ENCODE measurements at regions of chr11 and their contacts with region 1.

Region 1: DNA sequence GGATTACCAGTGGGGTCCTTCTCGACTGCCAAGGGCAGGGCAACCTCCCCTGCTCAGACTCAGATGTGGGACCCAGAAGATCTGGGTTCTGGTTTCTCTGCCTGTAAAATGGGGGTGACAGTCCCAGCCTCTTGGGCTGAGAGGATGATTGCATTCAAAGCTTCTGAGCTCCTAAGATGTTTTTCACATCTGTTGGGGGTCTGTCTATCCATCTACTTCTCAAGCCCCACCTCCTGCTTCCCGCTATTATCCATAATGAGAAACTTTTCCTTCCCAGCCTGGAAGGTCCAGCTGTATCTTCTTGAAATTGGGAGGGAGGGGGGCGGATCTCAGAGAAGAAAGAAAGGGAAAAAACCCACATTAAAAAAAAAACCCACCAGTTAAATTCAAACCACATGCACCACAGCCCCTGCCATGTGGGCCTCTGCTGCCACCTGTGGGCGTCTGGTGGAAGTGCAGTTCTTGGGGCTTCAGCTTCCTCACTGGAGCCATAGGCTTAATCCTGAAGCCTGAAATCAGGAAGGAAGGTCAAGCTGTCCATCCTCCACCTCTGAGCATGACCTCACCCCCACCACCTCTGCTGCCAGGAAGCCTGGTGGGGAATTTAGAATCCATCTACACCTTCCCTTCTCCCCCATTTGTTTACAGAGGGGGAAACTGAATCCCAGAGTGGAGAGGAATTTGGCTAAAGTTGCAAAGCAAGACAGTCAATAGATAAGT is 27.3 kb downstream of the ARHGEF17 start:
- DNase-seq: peak; percentile 58 to 85 (median 75)
- ATAC-seq: peak; percentile 90
- H3K4me3 ChIP-seq: no peak overlapping the region
- H3K4me3 Mint-ChIP-seq: no peak overlapping the region
- H3K27ac ChIP-seq: no peak overlapping the region
- H3K27ac Mint-ChIP-seq: no peak overlapping the region
- H3K4me1 ChIP-seq: peaks cover 3% of the 10 kb centered on the region
- H3K4me1 Mint-ChIP-seq: no peaks in the 10 kb centered on the region
- H3K27me3 ChIP-seq: no peaks in the 10 kb centered on the region
- H3K27me3 Mint-ChIP-seq: no peaks in the 10 kb centered on the region
- CTCF ChIP-seq: peak; percentile 98

Region 2: GRCh38 chr11:73184953-73185671 is 150.3 kb before region 1 on chr11:
- CTCF ChIA-PET with region 1: interaction called, 3 read pairs
- POLR2A ChIA-PET with region 1: no interaction called
- intact Hi-C with region 1: loop called in 1 of 2 experiments (anchors 5 kb)
- DNase-seq: peak in 13 of 14 experiments; percentile 7 to 67 (median 31)
- ATAC-seq: peak; percentile 76
- H3K4me3 ChIP-seq: no peak overlapping the region
- H3K4me3 Mint-ChIP-seq: no peak overlapping the region
- H3K27ac ChIP-seq: no peak overlapping the region
- H3K27ac Mint-ChIP-seq: no peak overlapping the region
- H3K4me1 ChIP-seq: peaks cover 10% of the 10 kb centered on the region
- H3K4me1 Mint-ChIP-seq: no peaks in the 10 kb centered on the region
- H3K27me3 ChIP-seq: no peaks in the 10 kb centered on the region
- H3K27me3 Mint-ChIP-seq: peaks cover 4% of the 10 kb centered on the region
- CTCF ChIP-seq: peak; percentile 67

Region 3: GRCh38 chr11:73295231-73295995 is 40.0 kb before region 1 on chr11:
- CTCF ChIA-PET with region 1: interaction called, 6 read pairs
- POLR2A ChIA-PET with region 1: no interaction called
- intact Hi-C with region 1: loop called (anchors 2 to 5 kb)
- DNase-seq: peak; percentile 56 to 82 (median 68)
- ATAC-seq: peak; percentile 87
- H3K4me3 ChIP-seq: no peak overlapping the region
- H3K4me3 Mint-ChIP-seq: no peak overlapping the region
- H3K27ac ChIP-seq: no peak overlapping the region
- H3K27ac Mint-ChIP-seq: no peak overlapping the region
- H3K4me1 ChIP-seq: peaks cover 3% of the 10 kb centered on the region
- H3K4me1 Mint-ChIP-seq: no peaks in the 10 kb centered on the region
- H3K27me3 ChIP-seq: no peaks in the 10 kb centered on the region
- H3K27me3 Mint-ChIP-seq: peaks cover 7% of the 10 kb centered on the region
- CTCF ChIP-seq: peak; percentile 89

Region 4: DNA sequence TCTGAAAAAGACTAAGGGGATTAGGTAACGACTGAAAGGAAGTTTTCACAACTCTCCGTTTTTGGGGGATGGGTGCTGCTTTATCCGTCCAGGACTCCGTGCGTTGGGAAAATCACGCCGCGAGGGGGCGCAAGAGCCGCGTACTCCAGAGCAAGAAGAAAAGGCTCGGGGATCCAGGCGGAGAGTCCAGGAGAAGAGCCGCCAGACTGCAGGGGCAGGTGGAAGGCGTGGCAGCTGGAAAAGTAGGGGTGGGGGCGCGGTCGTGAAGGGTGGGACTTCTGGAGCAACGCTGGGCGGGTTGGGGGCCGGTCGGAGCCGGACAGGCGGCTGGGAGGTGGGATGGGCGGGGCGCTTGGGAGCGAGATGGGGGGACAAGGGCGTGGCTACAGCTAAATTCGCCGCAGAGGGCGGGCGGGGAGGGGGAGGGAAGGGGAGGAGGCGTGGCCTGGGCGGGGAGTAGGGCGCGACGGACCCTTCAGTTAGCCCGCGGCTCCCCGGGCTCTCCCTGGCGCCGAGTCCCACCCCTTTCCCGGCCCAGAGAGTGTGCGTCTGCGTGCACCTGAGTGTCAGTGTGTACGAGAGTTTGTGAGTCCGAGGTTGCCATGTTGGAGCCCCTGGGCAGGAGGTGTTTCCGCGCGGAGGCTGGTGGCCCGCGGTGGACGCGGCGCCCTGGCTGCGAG is 27.9 kb before region 1 on chr11:
- CTCF ChIA-PET with region 1: interaction called, 38 read pairs
- POLR2A ChIA-PET with region 1: interaction called, 4 read pairs
- intact Hi-C with region 1: loop called (anchors 1 kb)
- DNase-seq: peak; percentile 82 to 96 (median 86)
- ATAC-seq: peak; percentile 78
- H3K4me3 ChIP-seq: peak overlapping the region; percentile 70
- H3K4me3 Mint-ChIP-seq: peak overlapping the region; percentile 92
- H3K27ac ChIP-seq: no peak overlapping the region
- H3K27ac Mint-ChIP-seq: no peak overlapping the region
- H3K4me1 ChIP-seq: peaks cover 24% of the 10 kb centered on the region
- H3K4me1 Mint-ChIP-seq: peaks cover 10% of the 10 kb centered on the region
- H3K27me3 ChIP-seq: peaks cover 23% of the 10 kb centered on the region in 2 experiments
- H3K27me3 Mint-ChIP-seq: peaks cover 41% of the 10 kb centered on the region
- CTCF ChIP-seq: peak; percentile 65

Region 5: GRCh38 chr11:73384872-73385689 is 49.7 kb after region 1 on chr11:
- CTCF ChIA-PET with region 1: no interaction called
- POLR2A ChIA-PET with region 1: no interaction called
- intact Hi-C with region 1: no loop called
- DNase-seq: peak in 5 of 14 experiments; percentile 22 to 72 (median 51)
- ATAC-seq: peak; percentile 52
- H3K4me3 ChIP-seq: no peak overlapping the region
- H3K4me3 Mint-ChIP-seq: peak overlapping the region; percentile 63
- H3K27ac ChIP-seq: peak overlapping the region in 1 of 2 donors; percentile 45
- H3K27ac Mint-ChIP-seq: peak overlapping the region; percentile 80
- H3K4me1 ChIP-seq: peaks cover 94% of the 10 kb centered on the region
- H3K4me1 Mint-ChIP-seq: peaks cover 63% of the 10 kb centered on the region
- H3K27me3 ChIP-seq: no peaks in the 10 kb centered on the region
- H3K27me3 Mint-ChIP-seq: no peaks in the 10 kb centered on the region
- CTCF ChIP-seq: no peak

Region 6: GRCh38 chr11:73578592-73579185 is 243.3 kb after region 1 on chr11:
- CTCF ChIA-PET with region 1: no interaction called
- POLR2A ChIA-PET with region 1: no interaction called
- intact Hi-C with region 1: no loop called
- DNase-seq: no peak
- ATAC-seq: no peak
- H3K4me3 ChIP-seq: no peak overlapping the region
- H3K4me3 Mint-ChIP-seq: no peak overlapping the region
- H3K27ac ChIP-seq: no peak overlapping the region
- H3K27ac Mint-ChIP-seq: no peak overlapping the region
- H3K4me1 ChIP-seq: no peaks in the 10 kb centered on the region
- H3K4me1 Mint-ChIP-seq: peaks cover 44% of the 10 kb centered on the region
- H3K27me3 ChIP-seq: no peaks in the 10 kb centered on the region
- H3K27me3 Mint-ChIP-seq: no peaks in the 10 kb centered on the region
- CTCF ChIP-seq: no peak